ENCODE measurements at regions of chr20 and their contacts with region 1.

Region 1: DNA sequence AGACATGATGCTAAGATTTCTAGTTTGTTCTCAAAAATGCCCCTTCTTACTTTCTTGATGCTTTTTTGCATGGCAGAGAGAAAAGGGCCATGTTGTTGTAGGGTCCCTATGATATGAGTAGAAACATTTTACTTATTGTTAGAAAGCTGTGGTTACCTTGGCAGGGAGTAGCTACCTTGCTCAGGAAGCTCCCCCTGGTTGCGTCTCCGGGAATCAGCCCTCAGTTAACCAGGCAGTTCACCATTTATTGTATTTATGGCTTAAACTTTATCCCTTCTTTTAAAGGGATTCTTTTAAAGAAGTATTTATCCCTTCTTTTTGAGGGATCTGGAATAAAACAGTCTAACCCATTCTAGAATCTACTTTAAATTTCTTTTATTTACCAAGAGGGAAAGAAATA is 113.9 kb upstream of the PROKR2 start:
- DNase-seq: no peak
- H3K4me3 ChIP-seq: no peak overlapping the region
- H3K27ac ChIP-seq: no peak overlapping the region
- H3K4me1 ChIP-seq: no peaks in the 10 kb centered on the region
- H3K27me3 ChIP-seq: peaks cover 7% of the 10 kb centered on the region
- CTCF ChIP-seq: no peak
- EP300 ChIP-seq: no peak
- POLR2A ChIP-seq: no peak

Region 2: GRCh38 chr20:5369629-5370542 is 60.8 kb before region 1 on chr20:
- in situ Hi-C with region 1: loop called in 1 of 4 experiments (anchors 10 kb)
- intact Hi-C with region 1: no loop called
- DNase-seq: no peak
- H3K4me3 ChIP-seq: no peak overlapping the region
- H3K27ac ChIP-seq: no peak overlapping the region
- H3K4me1 ChIP-seq: no peaks in the 10 kb centered on the region
- H3K27me3 ChIP-seq: no peaks in the 10 kb centered on the region
- CTCF ChIP-seq: no peak
- EP300 ChIP-seq: no peak
- POLR2A ChIP-seq: no peak